HCT116 (cell line): ENCODE measurements at regions of chr3 and their contacts with region 1.

Region 1: DNA sequence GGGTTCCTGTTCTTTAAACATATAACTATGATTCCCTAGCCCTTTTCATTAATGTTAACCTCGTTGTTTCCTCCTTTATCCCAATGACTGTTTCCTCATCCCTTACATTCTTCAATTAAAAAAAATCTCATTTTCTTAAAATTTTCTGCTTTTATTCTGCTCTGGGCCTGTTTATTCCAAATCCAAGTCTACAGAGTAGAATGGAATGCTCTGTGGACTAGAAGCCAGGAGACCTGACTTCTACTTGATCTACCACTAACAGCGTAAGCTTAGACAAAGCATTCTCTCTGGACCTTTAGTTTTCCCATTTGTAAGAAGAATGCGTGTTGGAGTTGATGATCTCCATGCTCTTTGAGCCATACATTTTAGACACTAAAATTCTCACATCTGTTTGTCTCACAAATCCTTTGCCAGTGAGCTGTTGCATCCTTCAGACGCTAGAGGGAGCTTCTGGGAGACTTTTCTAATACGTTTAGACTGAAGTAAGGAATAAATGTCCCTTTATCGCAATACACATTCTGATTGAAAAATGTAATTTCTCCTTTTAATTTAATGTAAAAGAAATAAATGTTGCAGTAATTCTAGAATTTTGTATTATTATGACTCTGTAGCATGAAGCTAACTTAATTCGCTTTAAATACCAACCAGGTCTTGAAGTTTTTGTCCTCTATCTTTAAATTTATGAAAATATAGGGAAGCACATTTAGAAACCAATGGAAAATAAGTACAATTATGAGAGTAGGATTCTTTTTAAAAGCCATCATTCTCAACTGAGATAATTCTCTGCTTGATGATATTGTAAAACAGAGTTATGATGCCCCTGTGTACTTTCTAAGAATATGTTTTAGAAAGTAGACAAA is 21.7 kb upstream of the GMNC start:
- DNase-seq: peak; percentile 54
- ATAC-seq: peak; percentile 85
- H3K4me3 ChIP-seq: no peak overlapping the region
- H3K27ac ChIP-seq: no peak overlapping the region
- H3K4me1 ChIP-seq: no peaks in the 10 kb centered on the region
- H3K27me3 ChIP-seq: no peaks in the 10 kb centered on the region
- CTCF ChIP-seq: peak; percentile 58 to 95 (median 89)
- POLR2A ChIP-seq: no peak
- RAD21 ChIP-seq: peak; percentile 68

Region 2: GRCh38 chr3:190811775-190812480 is 72.3 kb before region 1 on chr3:
- CTCF ChIA-PET with region 1: interaction called, 3 read pairs
- POLR2A ChIA-PET with region 1: no interaction called
- RAD21 ChIA-PET with region 1: no interaction called
- intact Hi-C with region 1: loop called (anchors 2 kb)
- DNase-seq: peak; percentile 67
- ATAC-seq: peak; percentile 95
- H3K4me3 ChIP-seq: no peak overlapping the region
- H3K27ac ChIP-seq: no peak overlapping the region
- H3K4me1 ChIP-seq: no peaks in the 10 kb centered on the region
- H3K27me3 ChIP-seq: no peaks in the 10 kb centered on the region
- CTCF ChIP-seq: peak; percentile 64 to 84 (median 74)
- POLR2A ChIP-seq: no peak
- RAD21 ChIP-seq: peak; percentile 79